ENCODE measurements at regions of chr11 and their contacts with region 1.

Region 1: GRCh38 chr11:94493281-94494125 is at the starts of genes ANKRD49 and MRE11:
- DNase-seq: peak; percentile 94
- ATAC-seq: peak; percentile 99
- H3K4me3 Mint-ChIP-seq: peak within 1 kb of the TSS; percentile 93
- H3K27ac Mint-ChIP-seq: peak within 1 kb of the TSS; percentile 92
- H3K4me1 Mint-ChIP-seq: peaks cover 39% of the 10 kb centered on the region
- H3K27me3 Mint-ChIP-seq: no peaks in the 10 kb centered on the region
- CTCF ChIP-seq: no peak
- total RNA-seq, gene ANKRD49: 39.5 and 46.5 TPM in 2 replicates
- total RNA-seq, gene MRE11: 39.7 and 40.1 TPM in 2 replicates

Region 2: DNA sequence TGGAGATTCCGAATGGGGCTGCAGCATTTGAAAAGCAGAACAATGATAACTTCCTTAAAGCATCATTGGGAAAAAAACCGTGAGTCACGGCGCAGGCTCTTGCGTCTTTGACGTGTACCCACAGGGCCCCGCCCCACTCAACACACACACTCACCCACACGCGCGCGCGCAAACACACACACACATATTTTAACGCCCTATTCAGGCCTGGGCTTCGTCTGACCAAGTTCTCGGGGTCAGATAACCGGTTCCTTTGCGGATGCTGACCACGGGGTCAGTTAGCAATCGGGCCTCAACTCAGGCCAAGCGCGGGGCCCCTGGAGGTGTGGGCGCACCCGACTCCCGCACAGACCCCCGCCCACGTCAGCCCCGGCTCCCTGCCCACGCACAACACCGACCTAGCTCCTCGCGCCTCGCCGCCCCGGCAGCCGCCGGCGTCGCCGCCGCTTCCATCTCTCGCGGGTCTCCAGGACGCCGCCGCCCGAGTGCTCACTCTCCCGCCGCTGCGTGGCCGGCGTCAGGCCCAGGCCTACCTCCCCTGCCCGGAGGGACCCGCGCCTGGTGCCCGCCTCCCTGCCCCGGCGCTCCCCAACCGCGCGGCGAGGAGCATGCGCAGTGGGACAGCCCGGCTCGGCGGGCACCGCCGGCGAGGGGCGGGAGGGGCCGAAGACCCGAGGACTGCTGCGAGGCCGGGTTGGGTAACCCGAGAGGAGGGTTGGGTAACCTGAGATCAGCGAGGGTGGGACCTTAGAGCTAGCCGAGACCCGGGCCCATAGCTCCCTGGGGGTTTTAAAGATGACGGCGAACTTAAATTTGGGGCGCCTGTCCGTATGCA is 1295.9 kb before region 1 on chr11 and contains the start of gene SLC36A4:
- CTCF ChIA-PET with region 1: no interaction called
- POLR2A ChIA-PET with region 1: no interaction called
- intact Hi-C with region 1: loop called (anchors 1 kb)
- DNase-seq: peak; percentile 85
- ATAC-seq: peak; percentile 86
- H3K4me3 Mint-ChIP-seq: peak within 1 kb of the TSS; percentile 91
- H3K27ac Mint-ChIP-seq: peak within 1 kb of the TSS; percentile 93
- H3K4me1 Mint-ChIP-seq: peaks cover 15% of the 10 kb centered on the region
- H3K27me3 Mint-ChIP-seq: no peaks in the 10 kb centered on the region
- CTCF ChIP-seq: no peak
- total RNA-seq, gene SLC36A4: 14.9 and 17.0 TPM in 2 replicates

Region 3: GRCh38 chr11:94543695-94544645 is 50.5 kb after region 1 on chr11 and contains the start of gene FUT4:
- CTCF ChIA-PET with region 1: no interaction called
- POLR2A ChIA-PET with region 1: no interaction called
- intact Hi-C with region 1: loop called (anchors 1 kb)
- DNase-seq: peak; percentile 72
- ATAC-seq: peak; percentile 83
- H3K4me3 Mint-ChIP-seq: peak within 1 kb of the TSS; percentile 98
- H3K27ac Mint-ChIP-seq: peak within 1 kb of the TSS; percentile 97
- H3K4me1 Mint-ChIP-seq: peaks cover 17% of the 10 kb centered on the region
- H3K27me3 Mint-ChIP-seq: peaks cover 10% of the 10 kb centered on the region
- CTCF ChIP-seq: no peak
- total RNA-seq, gene FUT4: 3.4 and 4.1 TPM in 2 replicates

Measured in activated B cell treated with CpG ODN at 0.5 μM for 24 hours (primary cell).